ENCODE measurements at regions of chr4 and their contacts with region 1.

Region 1: GRCh38 chr4:185039508-185040273 is 21.4 kb downstream of the HELT start:
- DNase-seq: peak; percentile 70 to 84 (median 81)
- H3K4me3 ChIP-seq: peak overlapping the region in 4 of 7 experiments; percentile 13 to 70 (median 46)
- H3K27ac ChIP-seq: no peak overlapping the region
- H3K4me1 ChIP-seq: peaks cover 0 to 6% (median 2%) of the 10 kb centered on the region in 4 experiments
- H3K27me3 ChIP-seq: peaks cover 0 to 1% (median 0%) of the 10 kb centered on the region in 5 experiments

Region 2: DNA sequence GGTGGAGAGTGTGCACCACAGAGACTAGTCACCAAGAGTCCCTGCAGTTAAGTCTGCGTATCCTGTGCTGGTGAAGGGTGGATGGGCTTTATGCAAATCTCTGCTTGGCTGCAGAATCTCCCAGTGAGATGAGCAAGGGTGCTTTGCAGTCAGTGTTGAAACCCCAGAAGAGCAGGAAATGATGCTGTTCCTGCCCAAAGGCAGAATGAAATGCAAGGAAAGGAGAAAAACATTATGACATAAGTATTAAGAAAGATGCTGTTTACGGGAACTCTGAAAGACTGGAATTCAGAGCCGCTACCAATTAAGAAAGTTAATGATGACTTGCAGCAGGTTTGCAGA is 188.5 kb before region 1 on chr4:
- CTCF ChIA-PET with region 1: no interaction called
- POLR2A ChIA-PET with region 1: no interaction called
- DNase-seq: peak; percentile 48 to 71 (median 69)
- H3K4me3 ChIP-seq: peak overlapping the region in 2 of 7 experiments; percentile 23 to 44
- H3K27ac ChIP-seq: no peak overlapping the region
- H3K4me1 ChIP-seq: peaks cover 49 to 77% (median 56%) of the 10 kb centered on the region in 4 experiments
- H3K27me3 ChIP-seq: no peaks in the 10 kb centered on the region

Region 3: DNA sequence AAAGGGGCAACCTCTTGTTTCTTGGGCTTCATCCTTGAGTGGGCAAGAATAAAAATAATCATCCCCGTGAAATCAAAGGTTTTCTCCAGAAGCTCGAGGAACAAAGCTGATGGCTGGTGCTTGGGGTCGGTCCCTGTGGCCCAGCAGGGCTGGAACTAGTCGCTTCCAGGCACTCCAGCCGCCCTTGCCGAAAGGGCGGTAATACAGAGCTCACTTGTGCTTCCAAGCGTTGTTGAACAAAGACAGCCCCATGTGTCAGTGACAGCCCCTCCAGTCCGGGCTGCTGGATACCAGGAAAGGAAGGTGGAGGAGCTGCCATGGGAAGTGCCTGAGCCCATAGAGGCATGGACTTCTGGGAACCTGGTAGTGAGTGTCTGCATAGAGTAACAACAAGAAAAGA is 16.2 kb before region 1 on chr4:
- CTCF ChIA-PET with region 1: interaction called, 13 read pairs
- POLR2A ChIA-PET with region 1: no interaction called
- DNase-seq: no peak
- H3K4me3 ChIP-seq: no peak overlapping the region
- H3K27ac ChIP-seq: no peak overlapping the region
- H3K4me1 ChIP-seq: peaks cover 0 to 31% (median 15%) of the 10 kb centered on the region in 4 experiments
- H3K27me3 ChIP-seq: peaks cover 10 to 77% (median 55%) of the 10 kb centered on the region in 5 experiments

Region 4: GRCh38 chr4:185054876-185055275 is 15.2 kb after region 1 on chr4:
- CTCF ChIA-PET with region 1: interaction called, 13 read pairs
- POLR2A ChIA-PET with region 1: interaction called, 4 read pairs
- DNase-seq: no peak
- H3K4me3 ChIP-seq: no peak overlapping the region
- H3K27ac ChIP-seq: no peak overlapping the region
- H3K4me1 ChIP-seq: no peaks in the 10 kb centered on the region
- H3K27me3 ChIP-seq: peaks cover 2 to 7% (median 4%) of the 10 kb centered on the region in 5 experiments

Region 5: GRCh38 chr4:185096032-185096653 is 56.5 kb after region 1 on chr4:
- CTCF ChIA-PET with region 1: interaction called, 14 read pairs
- POLR2A ChIA-PET with region 1: no interaction called
- DNase-seq: peak; percentile 60 to 77 (median 69)
- H3K4me3 ChIP-seq: no peak overlapping the region
- H3K27ac ChIP-seq: no peak overlapping the region
- H3K4me1 ChIP-seq: no peaks in the 10 kb centered on the region
- H3K27me3 ChIP-seq: no peaks in the 10 kb centered on the region

Region 6: DNA sequence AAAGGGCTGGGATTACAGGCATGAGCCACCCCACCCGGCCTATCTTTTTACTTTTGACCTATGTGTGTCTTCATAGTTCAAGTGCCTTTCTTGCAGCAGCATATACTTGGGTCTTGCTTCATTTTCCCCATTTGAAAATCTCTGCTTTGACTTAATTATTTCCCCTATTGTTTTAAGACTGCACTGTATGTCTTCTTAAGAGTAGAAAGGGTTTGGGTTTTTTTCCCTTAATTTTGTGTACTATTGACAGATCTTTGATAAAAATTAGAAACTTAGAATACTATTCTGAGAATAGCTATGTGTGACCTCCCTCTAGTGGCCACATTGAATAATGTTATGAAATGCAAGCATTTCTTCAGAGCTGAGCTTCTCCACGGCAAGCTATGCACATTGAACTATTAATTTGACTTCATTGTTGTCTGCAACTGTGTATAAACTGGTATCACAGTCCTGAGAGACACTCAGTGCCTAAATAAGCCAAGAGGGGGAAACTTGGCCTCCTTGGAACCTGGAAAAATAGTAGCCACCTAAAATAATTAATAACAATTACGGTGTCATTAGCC is 94.7 kb after region 1 on chr4:
- CTCF ChIA-PET with region 1: interaction called, 21 read pairs
- POLR2A ChIA-PET with region 1: no interaction called
- DNase-seq: peak; percentile 55 to 73 (median 70)
- H3K4me3 ChIP-seq: no peak overlapping the region
- H3K27ac ChIP-seq: no peak overlapping the region
- H3K4me1 ChIP-seq: no peaks in the 10 kb centered on the region
- H3K27me3 ChIP-seq: peaks cover 0 to 22% (median 0%) of the 10 kb centered on the region in 5 experiments

Measured in common myeloid progenitor, CD34-positive (primary cell).